Activated CD4-positive, alpha-beta T cell treated with anti-CD3 and anti-CD28 coated beads, Interleukin-2, amount 10 ng/mL, durations not matched to agents 24 days and 14 days (primary cell): ENCODE measurements at regions of chr12 and their contacts with region 1.

Region 1: DNA sequence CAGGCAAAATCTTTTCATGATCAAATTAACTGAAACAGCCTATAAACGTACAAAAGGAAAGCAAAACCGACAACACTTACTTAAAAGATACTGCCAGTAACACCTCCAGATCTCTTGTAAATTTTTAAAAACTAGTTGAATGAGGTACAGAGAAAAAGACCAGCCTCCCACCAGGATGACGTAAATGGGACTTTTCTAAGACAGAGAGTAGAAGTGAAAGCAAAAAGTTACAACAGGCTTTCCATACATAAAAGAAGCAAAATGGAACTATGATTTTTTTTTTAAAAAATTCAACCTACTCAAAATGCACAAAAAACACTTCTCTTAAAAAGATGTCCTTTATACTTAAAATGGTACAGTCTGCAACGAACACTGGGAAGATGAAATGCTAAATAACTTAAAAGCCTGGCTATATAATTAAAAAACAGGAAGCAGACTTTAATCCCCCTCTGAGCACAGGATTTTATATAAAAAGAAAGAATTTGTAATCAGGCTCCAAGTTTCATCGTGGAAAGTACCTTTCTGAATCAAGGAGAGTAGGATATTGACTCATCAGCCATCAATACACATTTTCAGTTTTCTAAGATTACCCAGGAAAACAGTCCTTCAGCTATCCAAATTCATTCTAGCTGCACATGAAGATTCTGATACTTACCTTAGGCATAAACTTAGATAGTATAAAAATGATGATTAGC is 14.2 kb upstream of the MYO1A start:
- DNase-seq: peak; percentile 89
- H3K4me3 Mint-ChIP-seq: peak overlapping the region; percentile 85
- H3K27ac Mint-ChIP-seq: peak overlapping the region; percentile 96
- H3K4me1 Mint-ChIP-seq: peaks cover 35% of the 10 kb centered on the region
- H3K27me3 Mint-ChIP-seq: no peaks in the 10 kb centered on the region

Region 2: DNA sequence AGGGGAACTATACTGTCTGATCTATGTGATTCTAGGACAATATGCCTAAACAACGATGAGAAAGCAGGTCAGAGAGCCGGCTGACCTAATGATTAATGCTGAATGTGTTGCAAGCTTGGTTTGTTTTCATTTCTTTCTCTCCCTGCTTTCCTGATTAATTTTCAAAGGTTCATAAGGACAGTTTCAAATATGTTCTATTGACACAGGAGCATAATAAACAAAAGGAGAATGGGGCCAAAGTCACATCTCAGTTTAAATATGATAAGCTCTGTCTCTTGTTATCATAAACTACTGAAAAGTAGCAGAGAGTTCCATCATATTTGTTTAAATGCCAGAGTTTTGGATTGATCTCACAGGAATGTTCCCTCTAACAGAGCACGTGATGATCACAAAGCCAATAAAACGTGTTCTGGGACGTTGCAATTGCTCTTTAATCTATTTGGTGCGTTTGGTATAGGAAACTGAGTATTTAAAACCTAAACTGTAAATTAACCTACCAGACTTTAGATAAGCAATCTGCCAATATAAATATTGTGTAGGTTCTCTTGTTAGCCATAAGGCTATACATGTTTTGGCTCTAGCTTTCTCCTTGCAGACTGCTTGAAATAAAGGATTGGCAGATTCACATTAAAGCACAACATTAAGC is 304.8 kb before region 1 on chr12:
- intact Hi-C with region 1: loop called (anchors 5 kb)
- DNase-seq: no peak
- H3K4me3 Mint-ChIP-seq: no peak overlapping the region
- H3K27ac Mint-ChIP-seq: no peak overlapping the region
- H3K4me1 Mint-ChIP-seq: peaks cover 13% of the 10 kb centered on the region
- H3K27me3 Mint-ChIP-seq: peaks cover 8% of the 10 kb centered on the region

Region 3: DNA sequence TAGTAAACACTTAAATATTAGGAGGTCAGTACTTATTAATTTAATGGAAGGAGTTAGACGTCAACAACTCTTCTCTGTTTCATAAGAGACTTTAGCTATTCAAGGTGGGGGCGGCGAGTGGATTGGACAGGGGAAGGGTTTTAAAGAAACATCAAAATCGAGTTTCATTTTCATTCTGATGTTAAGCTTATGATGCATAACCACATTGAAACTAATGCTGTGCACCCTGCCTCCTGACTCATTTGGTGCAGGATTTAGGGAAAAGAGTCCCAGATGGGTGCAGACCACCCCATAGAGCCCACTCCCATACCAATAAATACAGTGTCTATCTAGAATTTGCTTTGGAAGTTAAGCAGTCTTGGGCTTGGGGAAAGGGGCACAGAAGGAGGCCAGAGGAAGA is 65.2 kb before region 1 on chr12:
- intact Hi-C with region 1: loop called (anchors 2 kb)
- DNase-seq: peak; percentile 82
- H3K4me3 Mint-ChIP-seq: peak overlapping the region; percentile 35
- H3K27ac Mint-ChIP-seq: peak overlapping the region; percentile 73
- H3K4me1 Mint-ChIP-seq: peaks cover 41% of the 10 kb centered on the region
- H3K27me3 Mint-ChIP-seq: no peaks in the 10 kb centered on the region

Region 4: GRCh38 chr12:57005980-57006808 is 57.9 kb before region 1 on chr12 and contains the start of gene ZBTB39:
- intact Hi-C with region 1: loop called (anchors 1 kb)
- DNase-seq: peak; percentile 92
- H3K4me3 Mint-ChIP-seq: peak within 1 kb of the TSS; percentile 93
- H3K27ac Mint-ChIP-seq: peak within 1 kb of the TSS; percentile 86
- H3K4me1 Mint-ChIP-seq: peaks cover 44% of the 10 kb centered on the region
- H3K27me3 Mint-ChIP-seq: no peaks in the 10 kb centered on the region
- total RNA-seq, gene ZBTB39: 11.0 TPM in 2 replicates

Region 5: DNA sequence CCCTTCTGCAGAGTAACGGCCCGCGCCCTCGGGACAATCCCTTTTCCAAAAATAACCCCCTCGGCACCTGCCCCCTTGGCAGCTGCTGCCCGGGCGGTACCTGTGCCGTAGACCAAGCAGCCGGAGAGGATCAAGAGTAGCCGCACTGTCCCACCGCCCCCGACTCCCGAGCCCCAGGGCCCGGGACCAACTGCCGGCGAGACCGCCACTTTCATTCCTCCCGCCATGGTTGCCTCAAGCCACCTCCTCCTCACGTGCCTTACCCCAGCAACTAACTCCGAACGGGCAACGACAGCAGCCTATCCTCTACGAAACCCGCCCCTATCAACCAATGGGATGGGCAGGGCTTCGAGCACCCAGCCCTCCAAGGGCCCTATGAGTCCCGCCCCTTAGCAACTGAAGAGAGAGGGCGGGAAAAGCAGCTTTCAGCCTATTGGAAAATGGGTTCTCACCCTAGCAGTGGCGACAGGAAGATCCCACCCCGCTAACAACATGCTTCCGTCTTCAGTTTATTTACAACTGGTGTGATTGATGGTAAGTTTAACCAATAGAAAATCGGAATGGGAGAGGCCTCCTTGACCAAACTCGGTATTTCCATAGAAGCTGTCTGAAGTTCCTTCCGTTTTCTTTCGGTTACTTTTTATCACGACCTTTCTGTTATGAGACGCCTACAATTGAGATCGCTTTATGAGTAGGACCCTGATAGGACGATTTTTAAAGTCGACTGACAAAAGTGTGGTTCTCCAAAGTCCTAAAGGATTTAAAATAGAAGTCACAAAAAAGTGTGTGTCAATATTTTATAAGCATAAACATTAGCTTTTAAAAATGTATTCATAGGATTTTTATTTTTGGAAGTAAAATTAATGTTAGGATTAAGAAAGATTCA is 14.6 kb after region 1 on chr12 and contains the start of gene NEMP1:
- intact Hi-C with region 1: loop called (anchors 1 kb)
- DNase-seq: peak; percentile 99
- H3K4me3 Mint-ChIP-seq: peak within 1 kb of the TSS; percentile 100
- H3K27ac Mint-ChIP-seq: peak within 1 kb of the TSS; percentile 99
- H3K4me1 Mint-ChIP-seq: peaks cover 16% of the 10 kb centered on the region
- H3K27me3 Mint-ChIP-seq: no peaks in the 10 kb centered on the region
- total RNA-seq, gene NEMP1: 77.0 and 80.6 TPM in 2 replicates

Region 6: GRCh38 chr12:57088459-57089248 is 24.5 kb after region 1 on chr12 and contains the start of gene NAB2:
- intact Hi-C with region 1: loop called (anchors 1 kb)
- DNase-seq: peak; percentile 98
- H3K4me3 Mint-ChIP-seq: peak within 1 kb of the TSS; percentile 96
- H3K27ac Mint-ChIP-seq: peak within 1 kb of the TSS; percentile 97
- H3K4me1 Mint-ChIP-seq: peaks cover 68% of the 10 kb centered on the region
- H3K27me3 Mint-ChIP-seq: no peaks in the 10 kb centered on the region
- total RNA-seq, gene NAB2: 70.5 and 76.7 TPM in 2 replicates